A673 (cell line): ENCODE measurements at regions of chr1 and their contacts with region 1.

Region 1: DNA sequence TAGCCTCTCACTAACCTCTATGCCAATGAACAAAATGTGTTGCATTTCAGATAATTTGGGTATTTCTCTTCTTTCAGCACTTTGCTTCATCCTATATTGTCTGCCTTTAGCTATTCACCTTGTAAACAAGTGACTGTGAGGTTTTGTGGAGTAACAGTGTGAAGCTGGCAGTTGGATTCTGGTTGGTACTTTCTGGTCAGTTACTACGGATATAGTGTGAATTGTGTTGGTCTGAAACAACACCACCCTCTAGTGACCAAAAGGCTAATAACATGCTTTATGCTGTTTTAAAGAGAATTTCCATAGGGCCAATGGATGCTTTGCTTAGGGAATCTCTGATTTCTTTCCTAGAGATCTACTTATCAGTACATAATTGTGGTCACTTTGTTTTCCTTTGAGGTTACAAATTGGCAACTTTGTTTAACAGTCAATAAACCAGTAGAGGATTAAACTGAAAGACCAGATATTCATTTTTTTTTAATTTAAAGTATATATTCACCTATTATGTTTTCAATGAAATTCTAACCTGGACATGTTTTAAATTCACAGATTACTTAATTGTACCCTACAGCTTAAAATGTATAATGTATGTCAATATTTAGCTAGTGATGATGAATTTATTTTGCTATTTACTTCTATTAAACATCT is 2.5 kb upstream of the PTGER3 start:
- DNase-seq: peak; percentile 88
- H3K4me3 ChIP-seq: no peak overlapping the region
- H3K27ac ChIP-seq: no peak overlapping the region
- H3K4me1 ChIP-seq: peaks cover 30% of the 10 kb centered on the region
- H3K27me3 ChIP-seq: no peaks in the 10 kb centered on the region
- CTCF ChIP-seq: peak; percentile 87

Region 2: GRCh38 chr1:70134148-70134547 is 915.9 kb before region 1 on chr1:
- CTCF ChIA-PET with region 1: no interaction called
- POLR2A ChIA-PET with region 1: no interaction called
- intact Hi-C with region 1: loop called (anchors 5 kb)
- DNase-seq: no peak
- H3K4me3 ChIP-seq: no peak overlapping the region
- H3K27ac ChIP-seq: no peak overlapping the region
- H3K4me1 ChIP-seq: no peaks in the 10 kb centered on the region
- H3K27me3 ChIP-seq: no peaks in the 10 kb centered on the region
- CTCF ChIP-seq: no peak

Region 3: DNA sequence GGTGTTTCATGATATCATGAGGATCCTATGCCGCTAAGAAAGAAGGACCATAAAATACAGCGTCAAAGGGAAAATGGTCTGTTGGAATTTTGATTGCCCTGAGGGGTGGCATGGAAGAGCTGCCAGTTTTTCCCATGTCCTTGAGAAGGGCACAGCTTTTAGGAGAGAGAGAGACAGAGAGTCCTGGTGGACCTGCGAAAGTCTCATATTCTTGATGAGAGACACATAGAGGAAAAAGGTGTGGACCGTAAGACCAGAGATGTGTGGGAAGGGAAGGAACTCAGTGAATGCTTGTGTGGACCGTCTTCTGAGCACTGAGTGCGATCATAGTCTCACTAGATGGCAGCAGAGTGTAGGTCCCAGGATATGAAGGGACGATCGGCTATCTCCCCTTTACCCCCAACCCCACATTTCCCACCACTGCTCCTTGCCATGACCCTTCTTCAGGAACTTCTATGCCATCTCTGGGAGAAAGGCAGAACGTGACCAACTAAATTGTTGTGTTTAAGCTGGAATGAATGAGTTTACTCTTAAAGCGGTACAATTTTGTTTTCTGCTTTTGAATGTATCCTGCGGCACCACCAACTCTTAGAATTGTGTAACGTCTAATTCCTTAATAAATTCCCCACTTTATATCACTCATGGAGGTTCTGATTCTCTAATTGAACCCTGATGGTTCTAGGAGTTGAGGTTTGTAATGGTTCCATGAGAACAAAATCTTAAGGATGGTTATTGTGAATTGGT is 521.3 kb before region 1 on chr1:
- CTCF ChIA-PET with region 1: interaction called, 3 read pairs
- POLR2A ChIA-PET with region 1: no interaction called
- intact Hi-C with region 1: loop called (anchors 1 kb)
- DNase-seq: peak; percentile 79
- H3K4me3 ChIP-seq: no peak overlapping the region
- H3K27ac ChIP-seq: peak overlapping the region; percentile 14
- H3K4me1 ChIP-seq: peaks cover 52% of the 10 kb centered on the region
- H3K27me3 ChIP-seq: no peaks in the 10 kb centered on the region
- CTCF ChIP-seq: peak; percentile 83

Region 4: DNA sequence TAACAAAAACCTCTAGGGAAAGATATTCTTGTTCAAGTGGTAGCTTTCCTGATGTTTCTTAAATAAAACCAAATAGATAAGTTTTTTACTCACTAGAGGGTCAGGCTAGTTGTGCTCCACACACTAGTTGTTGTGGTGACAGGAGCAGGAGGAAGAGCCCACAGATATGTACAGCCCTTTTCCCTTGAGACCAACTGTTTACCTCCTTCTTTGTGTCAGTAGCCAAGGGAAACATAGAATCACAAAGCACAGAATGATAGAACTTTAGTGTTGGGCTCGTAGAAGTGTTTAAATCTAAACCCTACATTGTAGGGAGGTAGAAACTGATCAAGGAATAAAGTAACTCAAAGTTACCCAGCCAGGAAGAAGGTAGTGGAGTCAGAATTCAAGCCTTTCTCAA is 330.0 kb before region 1 on chr1:
- CTCF ChIA-PET with region 1: interaction called, 4 read pairs
- POLR2A ChIA-PET with region 1: no interaction called
- intact Hi-C with region 1: loop called (anchors 2 kb)
- DNase-seq: peak; percentile 97
- H3K4me3 ChIP-seq: peak overlapping the region; percentile 14
- H3K27ac ChIP-seq: peak overlapping the region; percentile 99
- H3K4me1 ChIP-seq: peaks cover 42% of the 10 kb centered on the region
- H3K27me3 ChIP-seq: no peaks in the 10 kb centered on the region
- CTCF ChIP-seq: no peak

Region 5: DNA sequence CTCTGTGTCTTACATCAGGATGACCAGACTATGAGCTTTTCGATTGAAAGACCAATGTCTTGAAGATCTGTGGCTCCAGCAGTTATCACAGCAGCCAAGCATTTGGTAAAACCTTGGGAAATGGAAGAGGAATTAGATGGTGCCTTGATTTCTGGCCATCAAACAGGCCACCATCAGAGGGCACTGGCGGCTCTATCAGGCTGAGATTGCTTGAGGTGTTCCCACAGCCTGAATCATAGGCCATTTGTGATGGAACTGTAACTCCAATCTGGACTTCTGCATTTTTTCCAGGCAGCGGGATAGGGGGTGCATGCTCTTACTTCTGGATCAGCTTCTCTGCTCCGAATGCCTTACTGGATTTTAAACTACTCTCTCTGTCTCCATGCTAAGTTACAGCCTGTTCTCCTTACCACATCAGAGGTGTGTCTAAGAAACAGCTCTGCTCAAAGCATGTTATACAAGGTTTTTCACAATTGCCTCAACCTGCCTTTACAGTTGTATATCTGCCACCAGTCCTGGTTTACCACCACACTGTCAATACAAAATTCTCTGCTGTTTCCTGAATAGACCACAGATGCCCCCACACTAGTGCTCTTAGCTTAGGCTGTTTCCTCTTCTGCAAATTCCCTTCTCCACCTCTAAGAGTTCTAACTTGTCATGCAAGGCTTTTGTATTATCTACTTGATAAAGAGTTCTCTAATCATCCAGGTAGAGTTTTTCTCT is 183.4 kb before region 1 on chr1:
- CTCF ChIA-PET with region 1: no interaction called
- POLR2A ChIA-PET with region 1: no interaction called
- intact Hi-C with region 1: no loop called
- DNase-seq: no peak
- H3K4me3 ChIP-seq: no peak overlapping the region
- H3K27ac ChIP-seq: no peak overlapping the region
- H3K4me1 ChIP-seq: no peaks in the 10 kb centered on the region
- H3K27me3 ChIP-seq: no peaks in the 10 kb centered on the region
- CTCF ChIP-seq: peak; percentile 23; the same call in 1 of the 2 replicates

Region 6: DNA sequence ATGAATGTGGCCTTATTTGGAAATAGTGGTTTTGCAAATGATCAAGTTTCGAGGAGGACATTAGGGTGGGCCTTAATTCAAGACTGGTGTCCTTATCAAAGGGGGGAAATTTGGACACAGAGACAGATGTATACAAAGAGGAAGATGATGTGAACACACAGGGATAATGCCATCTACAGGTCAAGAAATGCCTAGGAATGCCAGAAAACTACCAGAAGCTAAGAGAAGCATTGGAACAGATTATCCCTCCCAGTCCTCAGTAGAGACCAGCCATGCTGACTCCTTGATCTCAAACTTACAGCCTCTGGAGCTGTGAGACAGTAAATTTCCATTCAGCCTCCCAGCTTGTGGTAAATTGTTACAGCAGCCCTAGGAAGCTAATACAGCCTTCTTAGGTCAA is 153.9 kb before region 1 on chr1:
- CTCF ChIA-PET with region 1: no interaction called
- POLR2A ChIA-PET with region 1: interaction called, 18 read pairs
- intact Hi-C with region 1: loop called (anchors 2 kb)
- DNase-seq: peak; percentile 59
- H3K4me3 ChIP-seq: no peak overlapping the region
- H3K27ac ChIP-seq: no peak overlapping the region
- H3K4me1 ChIP-seq: peaks cover 30% of the 10 kb centered on the region
- H3K27me3 ChIP-seq: no peaks in the 10 kb centered on the region
- CTCF ChIP-seq: peak; percentile 61

Region 7: GRCh38 chr1:71147637-71148360 is 97.7 kb after region 1 on chr1:
- CTCF ChIA-PET with region 1: no interaction called
- POLR2A ChIA-PET with region 1: no interaction called
- intact Hi-C with region 1: no loop called
- DNase-seq: peak; percentile 10
- H3K4me3 ChIP-seq: no peak overlapping the region
- H3K27ac ChIP-seq: no peak overlapping the region
- H3K4me1 ChIP-seq: no peaks in the 10 kb centered on the region
- H3K27me3 ChIP-seq: no peaks in the 10 kb centered on the region
- CTCF ChIP-seq: no peak